ENCODE measurements at regions of chr9 and their contacts with region 1.

Region 1: DNA sequence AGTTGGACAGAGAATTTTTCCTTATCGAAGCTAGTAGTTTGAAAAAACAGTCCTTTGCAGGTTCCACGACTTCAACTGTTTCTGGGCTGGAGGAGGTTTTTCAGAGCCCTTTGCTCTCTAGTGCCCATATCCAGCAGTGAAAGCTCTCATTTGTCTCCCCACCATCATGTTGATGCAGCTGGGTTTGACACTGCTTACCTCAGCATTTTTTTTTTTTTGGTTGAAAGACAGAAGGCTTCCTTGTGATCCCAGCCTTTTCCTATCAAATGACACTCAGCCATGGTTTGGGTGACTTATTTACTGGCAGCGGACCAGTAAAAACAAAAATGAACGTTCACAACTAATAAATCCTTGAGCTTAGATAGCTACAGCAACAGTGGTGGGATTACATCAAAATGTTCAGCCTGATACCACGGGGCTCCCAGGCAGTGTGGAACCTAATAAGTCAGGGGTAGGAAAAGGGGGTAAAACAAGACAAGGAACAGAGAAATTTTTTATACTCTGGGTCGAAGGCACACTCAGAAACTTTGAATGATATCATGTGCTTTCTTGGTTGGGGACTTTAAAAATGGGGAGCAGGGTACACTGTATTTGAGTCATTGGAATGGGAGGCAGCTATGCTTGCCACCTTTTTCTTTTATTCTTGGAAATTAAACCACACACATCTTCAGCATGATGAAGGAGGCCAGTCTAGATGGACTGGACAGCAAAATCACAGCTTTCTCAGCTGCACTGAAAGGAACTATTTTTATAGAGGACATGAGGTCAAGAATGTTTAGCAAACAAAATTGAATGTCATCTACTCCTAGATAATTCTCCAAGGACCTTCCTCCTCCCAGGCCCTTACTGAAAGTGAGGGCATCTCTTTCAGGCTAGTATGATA is 308.9 kb upstream of the MPDZ start:
- DNase-seq: no peak
- H3K4me3 ChIP-seq: no peak overlapping the region
- H3K27ac ChIP-seq: peak overlapping the region in 1 of 4 donors; percentile 21
- H3K4me1 ChIP-seq: peaks cover 20 to 32% (median 24%) of the 10 kb centered on the region in 4 donors
- H3K27me3 ChIP-seq: no peaks in the 10 kb centered on the region
- CTCF ChIP-seq: no peak
- EP300 ChIP-seq: no peak
- POLR2A ChIP-seq: no peak

Region 2: GRCh38 chr9:13529321-13530104 is 58.9 kb before region 1 on chr9:
- intact Hi-C with region 1: loop called (anchors 5 kb)
- DNase-seq: no peak
- H3K4me3 ChIP-seq: no peak overlapping the region
- H3K27ac ChIP-seq: no peak overlapping the region
- H3K4me1 ChIP-seq: peaks cover 0 to 16% (median 11%) of the 10 kb centered on the region in 4 donors
- H3K27me3 ChIP-seq: no peaks in the 10 kb centered on the region
- CTCF ChIP-seq: no peak
- EP300 ChIP-seq: no peak
- POLR2A ChIP-seq: no peak

Region 3: DNA sequence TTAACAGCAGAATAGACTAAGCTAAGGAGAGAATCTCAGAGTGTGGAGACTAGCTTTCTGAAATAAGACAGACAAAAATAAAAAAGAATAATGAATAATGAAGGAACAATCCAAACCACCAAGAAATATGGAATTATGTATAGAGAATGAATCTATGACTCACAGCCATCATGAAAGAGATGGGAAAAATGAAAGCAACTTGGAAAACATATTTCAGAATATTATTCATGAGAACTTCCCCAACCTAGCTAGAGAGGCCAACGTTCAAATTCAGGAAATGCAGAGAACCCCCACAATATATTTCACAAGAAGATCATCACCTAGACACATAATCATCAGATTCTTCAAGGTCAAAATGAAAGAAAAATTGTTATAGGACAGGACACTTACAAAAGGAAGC is 40.1 kb after region 1 on chr9:
- intact Hi-C with region 1: loop called (anchors 5 kb)
- DNase-seq: no peak
- H3K4me3 ChIP-seq: no peak overlapping the region
- H3K27ac ChIP-seq: no peak overlapping the region
- H3K4me1 ChIP-seq: no peaks in the 10 kb centered on the region
- H3K27me3 ChIP-seq: no peaks in the 10 kb centered on the region
- CTCF ChIP-seq: no peak
- EP300 ChIP-seq: no peak
- POLR2A ChIP-seq: no peak

Measured in esophagus muscularis mucosa (tissue), 4 donors.